Activated CD4-positive, alpha-beta T cell treated with anti-CD3 and anti-CD28 coated beads for 36 hours (primary cell): ENCODE measurements at regions of chr12 and their contacts with region 1.

Region 1: DNA sequence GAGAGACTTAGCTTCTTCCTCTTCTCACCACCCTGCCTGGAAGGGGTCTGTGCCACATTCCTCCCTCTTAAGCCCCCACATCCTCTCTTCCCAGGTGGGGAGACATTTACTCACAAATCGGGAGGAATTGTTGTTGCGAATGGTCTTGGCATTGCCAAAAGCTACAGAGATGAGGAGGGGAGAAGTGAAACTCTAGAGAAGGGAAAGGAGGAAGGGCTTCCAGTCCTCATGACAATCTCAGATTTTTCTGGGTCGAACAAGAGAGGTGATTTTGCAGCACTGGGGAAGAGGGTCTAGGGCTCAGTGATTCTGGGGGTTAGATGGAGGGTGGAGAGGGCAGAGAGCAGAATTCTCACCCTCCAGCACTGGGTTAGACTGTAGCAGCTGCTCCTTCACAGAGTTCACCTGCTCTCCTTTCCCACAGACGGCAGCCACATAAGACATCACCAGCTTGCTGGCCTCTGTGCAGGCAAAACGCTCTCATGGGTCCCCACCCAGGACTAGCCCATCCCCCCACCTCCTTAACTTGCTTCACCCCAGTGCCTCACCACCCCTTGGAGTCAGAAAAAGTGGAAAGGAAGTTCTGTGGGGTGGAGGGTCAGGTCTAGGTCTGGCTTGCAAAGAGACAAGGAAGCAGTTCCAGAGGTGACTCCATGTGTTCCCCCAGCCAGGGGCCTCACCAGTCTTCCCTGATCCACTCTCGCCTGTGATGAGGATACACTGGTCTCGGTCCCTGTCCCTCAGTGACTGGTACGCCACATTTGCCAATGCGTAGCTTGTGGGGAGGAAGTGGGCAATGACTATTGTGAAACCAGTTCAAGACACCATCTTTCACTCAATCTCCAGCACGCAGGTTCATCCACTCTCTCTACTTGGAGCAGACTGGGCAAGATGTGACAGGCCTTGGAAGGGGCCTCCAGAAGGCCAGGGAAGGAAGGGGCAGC is 2.7 kb downstream of the MYO1A start:
- DNase-seq: peak; percentile 78
- ATAC-seq: peak; percentile 94
- H3K4me3 Mint-ChIP-seq: peak overlapping the region; percentile 22
- H3K27ac Mint-ChIP-seq: peak overlapping the region; percentile 85
- H3K4me1 Mint-ChIP-seq: peaks cover 32% of the 10 kb centered on the region
- H3K27me3 Mint-ChIP-seq: no peaks in the 10 kb centered on the region

Region 2: GRCh38 chr12:56922031-56922430 is 125.2 kb before region 1 on chr12:
- CTCF ChIA-PET with region 1: no interaction called
- POLR2A ChIA-PET with region 1: no interaction called
- intact Hi-C with region 1: no loop called
- DNase-seq: no peak
- ATAC-seq: no peak
- H3K4me3 Mint-ChIP-seq: no peak overlapping the region
- H3K27ac Mint-ChIP-seq: no peak overlapping the region
- H3K4me1 Mint-ChIP-seq: no peaks in the 10 kb centered on the region
- H3K27me3 Mint-ChIP-seq: peaks cover 2% of the 10 kb centered on the region

Region 3: GRCh38 chr12:57012600-57013465 is 34.4 kb before region 1 on chr12:
- CTCF ChIA-PET with region 1: interaction called, 8 read pairs
- POLR2A ChIA-PET with region 1: no interaction called
- intact Hi-C with region 1: loop called in 1 of 2 experiments (anchors 1 kb)
- DNase-seq: no peak
- ATAC-seq: no peak
- H3K4me3 Mint-ChIP-seq: no peak overlapping the region
- H3K27ac Mint-ChIP-seq: peak overlapping the region; percentile 56
- H3K4me1 Mint-ChIP-seq: peaks cover 41% of the 10 kb centered on the region
- H3K27me3 Mint-ChIP-seq: no peaks in the 10 kb centered on the region

Region 4: DNA sequence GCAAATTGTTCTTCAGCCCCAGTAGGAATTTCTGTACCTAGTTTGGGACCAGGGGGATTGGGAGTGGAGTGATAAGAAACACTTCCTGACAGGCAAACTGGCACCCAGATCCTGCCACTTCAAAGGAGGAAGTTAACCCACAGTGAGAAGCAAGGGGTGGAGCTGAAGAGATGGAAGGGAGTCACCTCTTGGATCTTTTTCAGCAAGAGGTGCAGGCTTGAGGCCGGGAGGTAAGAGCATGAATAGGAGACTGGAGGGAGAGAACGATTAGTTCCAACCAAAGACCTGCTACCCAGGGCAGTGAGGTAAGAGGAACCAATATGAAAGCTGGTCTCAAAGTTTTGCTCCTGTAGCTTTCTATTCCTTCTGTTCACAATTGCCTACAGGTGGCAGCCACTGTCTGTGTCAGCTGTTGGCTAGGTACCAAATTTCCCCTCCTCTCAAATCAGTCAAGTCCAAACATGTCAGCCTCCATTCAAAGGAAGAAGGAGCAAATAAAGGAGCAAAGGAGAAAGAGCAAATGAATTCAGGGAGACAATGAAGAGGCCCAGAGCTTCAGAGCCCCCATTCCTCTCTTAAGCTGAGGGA is 16.0 kb before region 1 on chr12:
- CTCF ChIA-PET with region 1: interaction called, 10 read pairs
- POLR2A ChIA-PET with region 1: no interaction called
- intact Hi-C with region 1: no loop called
- DNase-seq: peak; percentile 44
- ATAC-seq: peak; percentile 43
- H3K4me3 Mint-ChIP-seq: no peak overlapping the region
- H3K27ac Mint-ChIP-seq: peak overlapping the region; percentile 55
- H3K4me1 Mint-ChIP-seq: peaks cover 46% of the 10 kb centered on the region
- H3K27me3 Mint-ChIP-seq: no peaks in the 10 kb centered on the region

Region 5: GRCh38 chr12:57058454-57058853 is 11.2 kb after region 1 on chr12:
- CTCF ChIA-PET with region 1: interaction called, 41 read pairs
- POLR2A ChIA-PET with region 1: no interaction called
- intact Hi-C with region 1: no loop called
- DNase-seq: no peak
- ATAC-seq: no peak
- H3K4me3 Mint-ChIP-seq: no peak overlapping the region
- H3K27ac Mint-ChIP-seq: peak overlapping the region; percentile 48
- H3K4me1 Mint-ChIP-seq: peaks cover 33% of the 10 kb centered on the region
- H3K27me3 Mint-ChIP-seq: no peaks in the 10 kb centered on the region

Region 6: GRCh38 chr12:57085999-57086492 is 38.8 kb after region 1 on chr12:
- CTCF ChIA-PET with region 1: no interaction called
- POLR2A ChIA-PET with region 1: no interaction called
- intact Hi-C with region 1: no loop called
- DNase-seq: peak; percentile 74
- ATAC-seq: no peak
- H3K4me3 Mint-ChIP-seq: peak overlapping the region; percentile 93
- H3K27ac Mint-ChIP-seq: peak overlapping the region; percentile 97
- H3K4me1 Mint-ChIP-seq: peaks cover 42% of the 10 kb centered on the region
- H3K27me3 Mint-ChIP-seq: no peaks in the 10 kb centered on the region